Mammary epithelial cell (primary cell): ENCODE measurements at regions of chr3 and their contacts with region 1.

Region 1: GRCh38 chr3:88137836-88138235 is 11.9 kb upstream of the C3orf38 start:
- DNase-seq: no peak
- H3K4me3 ChIP-seq: no peak overlapping the region
- H3K27ac ChIP-seq: peak overlapping the region; percentile 29
- H3K4me1 ChIP-seq: peaks cover 32% of the 10 kb centered on the region
- H3K27me3 ChIP-seq: no peaks in the 10 kb centered on the region
- CTCF ChIP-seq: no peak

Region 2: DNA sequence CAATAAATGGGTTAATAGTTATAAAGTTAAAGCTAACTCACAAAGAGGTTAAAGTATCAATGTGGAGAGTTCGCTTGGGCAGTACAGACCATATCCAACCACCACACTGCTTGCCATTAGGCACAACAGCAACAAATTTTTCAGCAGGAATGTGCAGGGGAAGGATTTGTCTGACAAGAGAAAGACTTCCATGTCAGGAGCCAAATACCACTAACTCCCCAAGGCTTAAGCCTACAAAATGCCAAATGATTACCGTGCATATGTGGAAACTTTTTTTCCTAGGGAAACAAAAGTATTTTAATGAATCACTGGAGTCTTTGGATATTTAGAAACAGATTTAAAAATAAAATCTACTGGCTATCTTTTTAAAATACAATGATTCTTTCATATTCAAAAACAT is 1155.0 kb before region 1 on chr3:
- CTCF ChIA-PET with region 1: no interaction called
- dilution Hi-C with region 1: no loop called
- in situ Hi-C with region 1: no loop called
- intact Hi-C with region 1: loop called (anchors 10 kb)
- DNase-seq: no peak
- H3K4me3 ChIP-seq: no peak overlapping the region
- H3K27ac ChIP-seq: no peak overlapping the region
- H3K4me1 ChIP-seq: peaks cover 18% of the 10 kb centered on the region
- H3K27me3 ChIP-seq: no peaks in the 10 kb centered on the region
- CTCF ChIP-seq: no peak

Region 3: DNA sequence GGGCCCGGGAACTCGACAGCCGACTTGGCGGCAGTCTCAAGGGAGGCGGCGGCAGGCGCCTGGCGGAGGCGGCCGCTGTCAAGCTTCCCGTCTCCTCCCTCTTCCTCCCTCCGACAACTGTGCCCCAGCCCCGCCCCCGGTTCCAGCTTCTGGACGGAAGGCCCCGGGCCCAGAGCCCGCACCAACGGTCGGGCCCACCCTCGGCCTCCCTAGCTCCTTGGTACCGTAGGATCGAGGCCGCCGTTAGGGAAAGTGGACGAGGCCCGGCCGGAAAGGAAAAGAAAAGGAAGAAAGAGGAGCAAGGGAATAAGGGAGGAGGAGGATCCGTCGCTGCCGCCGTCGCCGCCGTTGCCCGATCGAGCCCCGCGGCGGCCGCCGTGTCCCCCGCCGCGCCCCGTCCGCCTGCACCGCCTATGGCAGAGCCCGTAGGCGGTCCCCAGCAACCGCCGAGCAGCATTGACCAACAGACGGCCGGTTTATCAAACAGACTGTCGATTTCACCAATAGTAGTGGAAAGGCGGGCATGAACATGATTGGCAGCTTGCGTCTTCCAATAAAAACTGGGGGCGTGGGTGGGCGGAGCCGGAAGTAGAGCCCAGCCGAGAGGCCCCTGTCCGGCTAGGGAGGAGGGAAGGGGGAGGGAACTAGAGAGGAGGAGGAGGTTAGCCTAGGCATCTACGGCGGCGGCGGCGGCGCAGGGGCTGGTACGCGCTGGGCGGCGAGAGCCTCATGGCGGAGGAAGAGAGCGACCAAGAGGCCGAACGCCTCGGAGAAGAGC is 79.1 kb before region 1 on chr3 and contains the starts of genes CGGBP1 and ZNF654:
- CTCF ChIA-PET with region 1: no interaction called
- dilution Hi-C with region 1: no loop called
- in situ Hi-C with region 1: no loop called
- intact Hi-C with region 1: no loop called
- DNase-seq: peak; percentile 99
- H3K4me3 ChIP-seq: peak within 1 kb of the TSS; percentile 84 to 94 (median 91)
- H3K27ac ChIP-seq: peak within 1 kb of the TSS; percentile 88
- H3K4me1 ChIP-seq: peaks cover 16% of the 10 kb centered on the region
- H3K27me3 ChIP-seq: no peaks in the 10 kb centered on the region
- CTCF ChIP-seq: no peak
- total RNA-seq, gene CGGBP1: 43.3 to 61.9 TPM
- total RNA-seq, gene ZNF654: 18.6 to 20.3 TPM

Region 4: GRCh38 chr3:88535563-88535962 is 397.7 kb after region 1 on chr3:
- CTCF ChIA-PET with region 1: no interaction called
- dilution Hi-C with region 1: no loop called
- in situ Hi-C with region 1: no loop called
- intact Hi-C with region 1: no loop called
- DNase-seq: no peak
- H3K4me3 ChIP-seq: no peak overlapping the region
- H3K27ac ChIP-seq: no peak overlapping the region
- H3K4me1 ChIP-seq: no peaks in the 10 kb centered on the region
- H3K27me3 ChIP-seq: no peaks in the 10 kb centered on the region
- CTCF ChIP-seq: no peak